GM12878 (cell line): ENCODE measurements at regions of chr6 and their contacts with region 1.

Region 1: DNA sequence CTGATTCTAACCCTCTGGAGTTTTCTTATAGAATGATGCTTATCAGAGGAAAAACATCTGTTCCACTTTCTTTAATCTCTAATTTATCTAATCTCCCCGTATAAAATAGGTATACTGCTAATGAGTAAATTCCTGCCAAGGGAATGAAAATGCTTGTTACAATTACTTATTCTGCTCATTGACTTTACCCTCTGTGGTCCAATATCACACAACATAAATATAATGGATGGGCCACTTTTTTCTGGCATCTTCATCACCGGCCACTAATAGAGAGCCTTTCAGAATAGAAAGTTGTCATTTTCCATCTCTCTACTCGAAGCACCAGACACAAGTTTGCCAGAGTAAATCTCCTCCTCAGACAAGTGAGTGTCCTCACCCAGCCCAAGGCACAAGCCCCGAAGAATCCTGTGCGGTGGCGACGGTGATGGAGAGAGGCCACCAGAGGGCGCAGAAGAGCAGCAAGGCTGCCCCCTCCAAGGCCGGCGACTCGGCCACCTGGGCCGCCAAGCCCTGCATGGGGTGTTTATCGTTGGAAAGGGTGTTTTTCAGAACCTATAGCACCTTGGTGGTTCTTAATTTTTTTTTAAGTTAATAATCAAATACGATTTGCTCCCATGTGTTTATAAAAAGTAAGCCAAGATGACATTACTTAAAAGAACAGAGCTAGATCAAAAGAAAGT is 212.9 kb upstream of the ARID1B start:
- DNase-seq: peak; percentile 46
- ATAC-seq: peak; percentile 100
- H3K4me3 ChIP-seq: no peak overlapping the region
- H3K27ac ChIP-seq: no peak overlapping the region
- H3K4me1 ChIP-seq: no peaks in the 10 kb centered on the region
- H3K27me3 ChIP-seq: no peaks in the 10 kb centered on the region; a peak in 1 of 4 replicates
- CTCF ChIP-seq: peak; percentile 91 to 94 (median 93)
- EP300 ChIP-seq: no peak
- POLR2A ChIP-seq: no peak
- RAD21 ChIP-seq: peak; percentile 97

Region 2: GRCh38 chr6:156508923-156509322 is 55.3 kb before region 1 on chr6:
- CTCF ChIA-PET with region 1: no interaction called
- POLR2A ChIA-PET with region 1: no interaction called
- RAD21 ChIA-PET with region 1: no interaction called
- SMC1A ChIA-PET with region 1: no interaction called
- in situ Hi-C with region 1: no loop called
- intact Hi-C with region 1: no loop called
- DNase-seq: no peak
- ATAC-seq: no peak; the same call in 2 of the 3 replicates
- H3K4me3 ChIP-seq: no peak overlapping the region
- H3K27ac ChIP-seq: no peak overlapping the region
- H3K4me1 ChIP-seq: no peaks in the 10 kb centered on the region
- H3K27me3 ChIP-seq: no peaks in the 10 kb centered on the region; a peak in 1 of 4 replicates
- CTCF ChIP-seq: no peak
- EP300 ChIP-seq: no peak
- POLR2A ChIP-seq: no peak
- RAD21 ChIP-seq: no peak

Region 3: DNA sequence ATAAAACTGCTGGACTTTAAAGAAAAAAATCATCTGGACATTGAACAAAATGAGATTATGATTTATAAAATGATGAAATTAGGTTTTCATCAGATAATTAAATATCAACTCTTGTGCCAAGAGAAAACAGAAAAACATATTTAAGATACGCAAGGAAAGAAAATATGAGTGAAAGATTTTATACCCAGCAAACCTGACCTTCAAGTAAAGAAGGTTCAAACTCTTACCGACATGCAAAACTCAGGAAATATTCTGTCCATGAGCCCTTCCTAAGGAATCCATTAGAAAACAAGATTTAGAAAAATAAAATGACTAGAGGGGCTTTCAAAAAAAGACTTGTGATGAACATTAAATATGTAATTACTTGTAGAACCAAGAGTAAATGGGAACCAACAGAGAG is 44.3 kb before region 1 on chr6:
- CTCF ChIA-PET with region 1: no interaction called
- POLR2A ChIA-PET with region 1: no interaction called
- RAD21 ChIA-PET with region 1: no interaction called
- SMC1A ChIA-PET with region 1: no interaction called
- in situ Hi-C with region 1: no loop called
- intact Hi-C with region 1: no loop called
- DNase-seq: no peak
- ATAC-seq: no peak
- H3K4me3 ChIP-seq: no peak overlapping the region
- H3K27ac ChIP-seq: no peak overlapping the region
- H3K4me1 ChIP-seq: no peaks in the 10 kb centered on the region
- H3K27me3 ChIP-seq: no peaks in the 10 kb centered on the region; a peak in 1 of 4 replicates
- CTCF ChIP-seq: no peak
- EP300 ChIP-seq: no peak
- POLR2A ChIP-seq: no peak
- RAD21 ChIP-seq: no peak

Region 4: GRCh38 chr6:156634951-156635371 is 70.7 kb after region 1 on chr6:
- CTCF ChIA-PET with region 1: no interaction called
- POLR2A ChIA-PET with region 1: no interaction called
- RAD21 ChIA-PET with region 1: interaction called, 4 read pairs
- SMC1A ChIA-PET with region 1: no interaction called
- in situ Hi-C with region 1: no loop called
- intact Hi-C with region 1: loop called (anchors 5 kb)
- DNase-seq: no peak
- ATAC-seq: no peak
- H3K4me3 ChIP-seq: no peak overlapping the region; the same call in 1 of the 2 replicates
- H3K27ac ChIP-seq: peak overlapping the region; percentile 83
- H3K4me1 ChIP-seq: peaks cover 32% of the 10 kb centered on the region
- H3K27me3 ChIP-seq: no peaks in the 10 kb centered on the region
- CTCF ChIP-seq: no peak
- EP300 ChIP-seq: no peak
- POLR2A ChIP-seq: no peak
- RAD21 ChIP-seq: no peak

Region 5: GRCh38 chr6:156767603-156768467 is 203.6 kb after region 1 on chr6:
- CTCF ChIA-PET with region 1: interaction called, 3 read pairs
- POLR2A ChIA-PET with region 1: no interaction called
- RAD21 ChIA-PET with region 1: no interaction called
- SMC1A ChIA-PET with region 1: no interaction called
- in situ Hi-C with region 1: loop called (anchors 5 kb)
- intact Hi-C with region 1: no loop called
- DNase-seq: peak; percentile 90
- ATAC-seq: peak; percentile 96
- H3K4me3 ChIP-seq: peak overlapping the region; percentile 56; the same call in 1 of the 2 replicates
- H3K27ac ChIP-seq: peak overlapping the region; percentile 63
- H3K4me1 ChIP-seq: peaks cover 19% of the 10 kb centered on the region
- H3K27me3 ChIP-seq: no peaks in the 10 kb centered on the region
- CTCF ChIP-seq: no peak
- EP300 ChIP-seq: peak; percentile 20 to 54; a peak in 3 of 4 replicates
- POLR2A ChIP-seq: no peak
- RAD21 ChIP-seq: 0 out of 2 replicates have a peak, but pooled peaks have one; percentile 15

Region 6: DNA sequence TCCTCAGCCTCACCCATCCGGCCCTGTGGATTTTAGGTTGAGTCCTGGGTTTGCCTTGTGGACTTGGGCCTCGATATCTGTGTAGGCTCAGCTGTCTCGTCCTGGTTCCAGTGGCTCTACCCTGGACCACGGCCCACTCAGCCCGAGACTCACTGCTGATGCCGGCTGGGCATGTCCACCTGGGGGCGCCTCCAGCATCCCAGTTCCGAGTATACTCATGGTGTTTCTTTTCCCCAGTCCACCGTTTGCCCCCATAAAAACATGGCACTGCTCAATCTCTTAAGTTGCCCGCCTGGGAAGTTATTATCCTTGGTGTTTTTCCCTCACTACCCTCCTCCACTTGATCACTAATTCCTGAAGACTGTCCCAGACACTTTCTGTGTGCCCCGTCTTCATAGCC is 312.0 kb after region 1 on chr6:
- CTCF ChIA-PET with region 1: no interaction called
- POLR2A ChIA-PET with region 1: no interaction called
- RAD21 ChIA-PET with region 1: no interaction called
- SMC1A ChIA-PET with region 1: no interaction called
- in situ Hi-C with region 1: no loop called
- intact Hi-C with region 1: loop called (anchors 10 kb)
- DNase-seq: no peak
- ATAC-seq: peak; percentile 34; the same call in 1 of the 3 replicates
- H3K4me3 ChIP-seq: no peak overlapping the region
- H3K27ac ChIP-seq: no peak overlapping the region
- H3K4me1 ChIP-seq: peaks cover under 1% of the 10 kb centered on the region; the same call in 1 of the 2 replicates
- H3K27me3 ChIP-seq: no peaks in the 10 kb centered on the region
- CTCF ChIP-seq: peak in 2 of 3 experiments; percentile 16 to 18; a peak in 2 of 6 replicates
- EP300 ChIP-seq: no peak
- POLR2A ChIP-seq: 0 out of 2 replicates have a peak, but pooled peaks have one; percentile 28
- RAD21 ChIP-seq: 0 out of 2 replicates have a peak, but pooled peaks have one; percentile 12

Region 7: GRCh38 chr6:157274471-157275226 is 710.4 kb after region 1 on chr6:
- CTCF ChIA-PET with region 1: no interaction called
- POLR2A ChIA-PET with region 1: no interaction called
- RAD21 ChIA-PET with region 1: no interaction called
- SMC1A ChIA-PET with region 1: no interaction called
- in situ Hi-C with region 1: no loop called
- intact Hi-C with region 1: loop called (anchors 2 kb)
- DNase-seq: peak; percentile 9
- ATAC-seq: peak; percentile 97
- H3K4me3 ChIP-seq: peak overlapping the region; percentile 79
- H3K27ac ChIP-seq: no peak overlapping the region
- H3K4me1 ChIP-seq: no peaks in the 10 kb centered on the region
- H3K27me3 ChIP-seq: no peaks in the 10 kb centered on the region; a peak in 1 of 4 replicates
- CTCF ChIP-seq: peak; percentile 59 to 82 (median 65); a peak in 4 of 6 replicates
- EP300 ChIP-seq: no peak
- POLR2A ChIP-seq: peak; percentile 35; the same call in 1 of the 2 replicates
- RAD21 ChIP-seq: peak; percentile 85